ENCODE measurements at regions of chrX and their contacts with region 1.

Region 1: DNA sequence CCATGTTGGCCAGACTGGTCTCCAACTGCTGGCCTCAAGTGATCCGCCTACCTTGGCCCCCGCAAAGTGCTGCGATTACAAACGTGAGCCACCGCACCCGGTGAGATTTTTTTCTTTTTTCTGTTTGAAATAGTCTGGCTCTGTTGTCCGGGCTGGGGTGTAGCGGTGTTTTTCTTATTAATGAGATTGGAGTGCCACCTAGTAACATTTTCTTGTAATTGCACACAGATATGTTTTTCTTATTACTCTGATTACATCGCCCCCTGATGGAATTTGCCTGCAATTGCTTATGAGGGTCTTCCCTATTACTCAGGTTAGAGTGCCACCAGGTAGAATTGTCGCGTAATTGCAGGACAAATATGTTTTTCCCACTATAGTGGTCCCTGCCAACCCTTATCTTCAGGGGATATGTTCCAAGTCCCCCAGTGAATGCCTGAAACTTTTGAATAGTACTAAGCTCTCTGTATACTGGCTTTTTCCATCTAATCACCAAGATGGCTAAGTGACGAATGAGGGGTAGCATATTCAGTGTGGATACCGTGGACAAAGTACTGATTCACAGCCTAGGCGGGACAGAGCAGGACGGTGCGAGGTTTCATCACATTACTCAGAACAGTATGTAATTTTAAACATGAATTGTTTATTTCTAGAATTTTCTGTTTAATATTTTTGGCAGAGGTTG is 8.6 kb upstream of the PDHA1 start:
- DNase-seq: peak; percentile 14
- H3K4me3 Mint-ChIP-seq: no peak overlapping the region
- H3K27ac Mint-ChIP-seq: no peak overlapping the region
- H3K4me1 Mint-ChIP-seq: peaks cover 1% of the 10 kb centered on the region
- H3K27me3 Mint-ChIP-seq: no peaks in the 10 kb centered on the region

Region 2: GRCh38 chrX:18390941-18391538 is 944.0 kb before region 1 on chrX:
- CTCF ChIA-PET with region 1: interaction called, 6 read pairs
- POLR2A ChIA-PET with region 1: no interaction called
- intact Hi-C with region 1: loop called (anchors 1 kb)
- DNase-seq: peak; percentile 55
- H3K4me3 Mint-ChIP-seq: no peak overlapping the region
- H3K27ac Mint-ChIP-seq: no peak overlapping the region
- H3K4me1 Mint-ChIP-seq: no peaks in the 10 kb centered on the region
- H3K27me3 Mint-ChIP-seq: no peaks in the 10 kb centered on the region

Region 3: GRCh38 chrX:18931972-18932371 is 403.1 kb before region 1 on chrX:
- CTCF ChIA-PET with region 1: interaction called, 8 read pairs
- POLR2A ChIA-PET with region 1: no interaction called
- intact Hi-C with region 1: loop called (anchors 2 kb)
- DNase-seq: no peak
- H3K4me3 Mint-ChIP-seq: no peak overlapping the region
- H3K27ac Mint-ChIP-seq: no peak overlapping the region
- H3K4me1 Mint-ChIP-seq: no peaks in the 10 kb centered on the region
- H3K27me3 Mint-ChIP-seq: no peaks in the 10 kb centered on the region

Region 4: DNA sequence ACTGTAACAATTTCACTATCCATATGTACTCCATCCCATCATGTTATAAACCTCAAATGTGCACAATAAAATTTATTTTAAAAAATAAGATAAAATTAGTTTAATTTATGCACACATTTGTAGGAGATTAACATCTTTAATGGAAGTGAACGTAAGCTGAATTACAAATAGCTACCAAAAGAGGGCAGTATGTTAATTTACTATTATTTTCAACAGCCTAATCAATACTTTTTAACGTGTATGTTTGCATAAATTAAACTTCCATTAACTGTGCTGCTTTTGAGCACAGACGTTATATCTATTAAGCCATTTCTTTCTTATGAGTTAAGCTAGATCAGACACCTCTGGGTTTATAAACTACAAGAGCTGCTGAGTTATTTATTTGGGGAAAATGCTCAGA is 294.7 kb before region 1 on chrX:
- CTCF ChIA-PET with region 1: interaction called, 12 read pairs
- POLR2A ChIA-PET with region 1: no interaction called
- intact Hi-C with region 1: no loop called
- DNase-seq: no peak
- H3K4me3 Mint-ChIP-seq: no peak overlapping the region
- H3K27ac Mint-ChIP-seq: no peak overlapping the region
- H3K4me1 Mint-ChIP-seq: no peaks in the 10 kb centered on the region
- H3K27me3 Mint-ChIP-seq: no peaks in the 10 kb centered on the region

Region 5: GRCh38 chrX:19204636-19205035 is 130.4 kb before region 1 on chrX:
- CTCF ChIA-PET with region 1: no interaction called
- POLR2A ChIA-PET with region 1: no interaction called
- intact Hi-C with region 1: no loop called
- DNase-seq: no peak
- H3K4me3 Mint-ChIP-seq: no peak overlapping the region
- H3K27ac Mint-ChIP-seq: no peak overlapping the region
- H3K4me1 Mint-ChIP-seq: no peaks in the 10 kb centered on the region
- H3K27me3 Mint-ChIP-seq: no peaks in the 10 kb centered on the region

Measured in activated CD4-positive, alpha-beta memory T cell treated with anti-CD3 and anti-CD28 coated beads for 36 hours (primary cell).